B cell (primary cell): ENCODE measurements at regions of chr9 and their contacts with region 1.

Region 1: DNA sequence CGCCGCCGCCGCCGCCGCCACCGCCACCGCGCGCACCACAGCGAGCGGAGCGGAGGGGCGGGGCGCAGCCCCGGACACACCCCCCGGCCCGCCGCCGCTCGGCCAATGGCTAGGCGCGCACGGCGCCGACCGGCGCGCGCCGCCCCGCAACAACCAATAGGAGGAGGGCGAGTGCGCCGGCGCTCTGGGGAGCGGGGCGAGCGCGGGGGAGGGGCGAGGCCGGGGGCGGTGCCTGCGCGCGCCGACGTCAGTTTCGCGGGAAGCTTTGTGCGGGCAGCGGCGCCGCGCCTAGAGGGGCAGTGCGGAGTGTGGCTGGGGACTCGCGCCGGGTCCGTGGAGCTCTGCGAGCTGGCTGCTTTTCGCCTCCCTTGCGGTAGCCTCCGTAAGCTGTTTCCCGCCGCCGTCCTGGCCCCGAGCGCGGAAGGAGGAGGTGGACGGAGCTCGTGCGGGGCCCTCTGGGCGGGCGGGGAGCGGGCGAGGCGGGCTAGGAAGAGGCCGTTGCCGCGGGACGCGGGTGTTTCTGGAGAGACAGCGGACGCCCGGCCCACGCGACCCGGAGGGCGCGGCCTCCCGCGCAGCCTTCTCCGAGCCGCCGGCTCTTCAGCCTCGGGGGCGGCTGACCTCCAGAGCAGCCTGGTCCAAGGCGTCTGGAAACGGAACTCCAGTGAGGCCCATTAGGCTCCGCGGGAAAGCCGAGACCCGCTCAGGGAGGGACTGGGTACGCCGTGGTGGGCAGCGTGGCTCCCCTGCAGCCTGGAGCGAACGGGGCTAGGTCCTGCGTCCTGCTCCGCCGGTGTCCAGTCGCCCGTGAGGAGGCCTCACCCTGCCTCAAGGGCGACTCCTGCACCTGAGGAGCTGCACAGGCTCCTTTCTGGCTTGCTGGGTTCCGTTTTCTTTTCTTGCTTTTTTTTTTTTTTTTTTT is at the start of gene ZMYND19:
- DNase-seq: peak; percentile 94
- ATAC-seq: peak; percentile 97
- H3K4me3 ChIP-seq: peak within 1 kb of the TSS; percentile 38 to 83 (median 80)
- H3K4me3 Mint-ChIP-seq: peak within 1 kb of the TSS; percentile 99
- H3K27ac ChIP-seq: peak within 1 kb of the TSS in 1 of 2 donors; percentile 66
- H3K27ac Mint-ChIP-seq: peak within 1 kb of the TSS; percentile 95
- H3K4me1 ChIP-seq: peaks cover 9 to 15% of the 10 kb centered on the region in 2 donors
- H3K4me1 Mint-ChIP-seq: peaks cover 12% of the 10 kb centered on the region
- H3K27me3 ChIP-seq: no peaks in the 10 kb centered on the region
- H3K27me3 Mint-ChIP-seq: no peaks in the 10 kb centered on the region
- CTCF ChIP-seq: no peak
- total RNA-seq, gene ZMYND19: 24.1 and 25.5 TPM in 2 replicates

Region 2: DNA sequence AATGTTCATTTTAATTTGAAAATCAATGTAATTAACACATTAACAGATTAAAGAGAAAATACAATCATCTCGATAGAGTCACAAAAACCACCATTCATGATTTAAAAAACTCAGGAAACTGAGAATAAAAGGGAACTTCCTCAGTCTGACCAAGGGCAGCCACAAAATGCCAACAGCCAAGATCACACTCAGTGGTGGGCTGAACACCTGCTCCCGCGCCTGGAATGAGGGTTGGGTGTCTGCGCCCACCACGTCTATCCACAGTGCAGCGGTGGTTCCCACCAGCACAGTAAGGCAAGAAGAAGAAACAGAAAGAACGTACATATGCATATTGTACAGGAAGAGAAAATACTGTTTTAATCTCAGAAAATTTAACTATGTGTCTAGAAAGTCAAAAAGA is 119.9 kb before region 1 on chr9:
- CTCF ChIA-PET with region 1: no interaction called
- POLR2A ChIA-PET with region 1: no interaction called
- intact Hi-C with region 1: no loop called
- DNase-seq: no peak
- ATAC-seq: no peak
- H3K4me3 ChIP-seq: no peak overlapping the region
- H3K4me3 Mint-ChIP-seq: no peak overlapping the region
- H3K27ac ChIP-seq: no peak overlapping the region
- H3K27ac Mint-ChIP-seq: no peak overlapping the region
- H3K4me1 ChIP-seq: peaks cover 0 to 4% of the 10 kb centered on the region in 2 donors
- H3K4me1 Mint-ChIP-seq: peaks cover 3% of the 10 kb centered on the region
- H3K27me3 ChIP-seq: no peaks in the 10 kb centered on the region
- H3K27me3 Mint-ChIP-seq: no peaks in the 10 kb centered on the region
- CTCF ChIP-seq: no peak

Region 3: GRCh38 chr9:137578518-137579258 is 12.0 kb before region 1 on chr9 and contains the start of gene DPH7:
- CTCF ChIA-PET with region 1: interaction called, 13 read pairs
- POLR2A ChIA-PET with region 1: interaction called, 7 read pairs
- intact Hi-C with region 1: loop called (anchors 1 kb)
- DNase-seq: peak; percentile 92
- ATAC-seq: peak; percentile 97
- H3K4me3 ChIP-seq: peak within 1 kb of the TSS in 4 of 5 experiments; percentile 63 to 92 (median 90)
- H3K4me3 Mint-ChIP-seq: peak within 1 kb of the TSS; percentile 80
- H3K27ac ChIP-seq: peak within 1 kb of the TSS in 1 of 2 donors; percentile 78
- H3K27ac Mint-ChIP-seq: peak within 1 kb of the TSS; percentile 26
- H3K4me1 ChIP-seq: peaks cover 18 to 30% of the 10 kb centered on the region in 2 donors
- H3K4me1 Mint-ChIP-seq: peaks cover 26% of the 10 kb centered on the region
- H3K27me3 ChIP-seq: no peaks in the 10 kb centered on the region
- H3K27me3 Mint-ChIP-seq: no peaks in the 10 kb centered on the region
- CTCF ChIP-seq: peak; percentile 94
- total RNA-seq, gene DPH7: 64.7 and 69.1 TPM in 2 replicates

Region 4: GRCh38 chr9:137605121-137606004 is 14.6 kb after region 1 on chr9 and contains the start of gene ARRDC1:
- CTCF ChIA-PET with region 1: no interaction called
- POLR2A ChIA-PET with region 1: interaction called, 7 read pairs
- intact Hi-C with region 1: loop called (anchors 1 kb)
- DNase-seq: peak; percentile 93
- ATAC-seq: peak; percentile 86
- H3K4me3 ChIP-seq: peak within 1 kb of the TSS; percentile 34 to 74 (median 60)
- H3K4me3 Mint-ChIP-seq: peak within 1 kb of the TSS; percentile 86
- H3K27ac ChIP-seq: peak within 1 kb of the TSS in 1 of 2 donors; percentile 61
- H3K27ac Mint-ChIP-seq: peak within 1 kb of the TSS; percentile 65
- H3K4me1 ChIP-seq: peaks cover 12 to 25% of the 10 kb centered on the region in 2 donors
- H3K4me1 Mint-ChIP-seq: peaks cover 21% of the 10 kb centered on the region
- H3K27me3 ChIP-seq: no peaks in the 10 kb centered on the region
- H3K27me3 Mint-ChIP-seq: no peaks in the 10 kb centered on the region
- CTCF ChIP-seq: no peak
- total RNA-seq, gene ARRDC1: 89.2 and 96.6 TPM in 2 replicates